ENCODE measurements at regions of chr4 and their contacts with region 1.

Region 1: GRCh38 chr4:169810325-169811323 is 52.9 kb upstream of the HPF1 start:
- DNase-seq: peak; percentile 8
- ATAC-seq: peak; percentile 77
- H3K4me3 ChIP-seq: no peak overlapping the region
- H3K27ac ChIP-seq: no peak overlapping the region
- H3K4me1 ChIP-seq: no peaks in the 10 kb centered on the region
- H3K27me3 ChIP-seq: no peaks in the 10 kb centered on the region
- CTCF ChIP-seq: peak; percentile 66 to 76 (median 67)
- EP300 ChIP-seq: no peak
- POLR2A ChIP-seq: no peak
- RAD21 ChIP-seq: peak; percentile 74

Region 2: GRCh38 chr4:169311643-169312365 is 498.8 kb before region 1 on chr4:
- CTCF ChIA-PET with region 1: no interaction called
- POLR2A ChIA-PET with region 1: no interaction called
- RAD21 ChIA-PET with region 1: no interaction called
- SMC1A ChIA-PET with region 1: no interaction called
- in situ Hi-C with region 1: no loop called
- intact Hi-C with region 1: no loop called
- DNase-seq: peak; percentile 30
- ATAC-seq: peak; percentile 96
- H3K4me3 ChIP-seq: no peak overlapping the region
- H3K27ac ChIP-seq: no peak overlapping the region
- H3K4me1 ChIP-seq: no peaks in the 10 kb centered on the region
- H3K27me3 ChIP-seq: no peaks in the 10 kb centered on the region
- CTCF ChIP-seq: peak; percentile 42 to 45 (median 44)
- EP300 ChIP-seq: no peak
- POLR2A ChIP-seq: no peak
- RAD21 ChIP-seq: peak; percentile 71

Region 3: GRCh38 chr4:169795585-169795984 is 15.0 kb before region 1 on chr4:
- CTCF ChIA-PET with region 1: interaction called, 15 read pairs
- POLR2A ChIA-PET with region 1: no interaction called
- RAD21 ChIA-PET with region 1: no interaction called
- SMC1A ChIA-PET with region 1: interaction called, 6 read pairs
- in situ Hi-C with region 1: no loop called
- intact Hi-C with region 1: no loop called
- DNase-seq: no peak
- ATAC-seq: no peak
- H3K4me3 ChIP-seq: no peak overlapping the region
- H3K27ac ChIP-seq: no peak overlapping the region
- H3K4me1 ChIP-seq: no peaks in the 10 kb centered on the region
- H3K27me3 ChIP-seq: peaks cover 0 to 3% of the 10 kb centered on the region in 2 experiments; a peak in 2 of 4 replicates
- CTCF ChIP-seq: no peak
- EP300 ChIP-seq: no peak
- POLR2A ChIP-seq: no peak
- RAD21 ChIP-seq: no peak

Region 4: DNA sequence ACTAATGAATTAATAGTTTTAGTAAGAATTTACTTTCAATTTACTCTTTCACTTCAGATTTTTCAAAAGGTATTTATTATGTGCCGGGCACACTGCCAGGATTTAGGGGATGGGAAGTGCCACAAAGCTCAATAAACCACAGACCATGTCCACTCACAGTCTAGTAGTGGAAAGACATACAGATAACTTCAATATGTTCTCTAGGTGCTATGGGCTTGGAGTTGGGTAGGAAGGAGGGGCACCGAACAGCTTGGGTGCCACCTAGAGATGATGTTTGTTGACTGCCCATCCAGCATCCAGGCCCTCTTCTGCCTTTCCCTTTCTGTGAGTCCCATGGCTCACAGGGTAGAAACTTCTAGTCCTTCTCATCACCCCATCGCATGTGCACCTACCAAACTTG is 197.7 kb after region 1 on chr4:
- CTCF ChIA-PET with region 1: interaction called, 12 read pairs
- POLR2A ChIA-PET with region 1: no interaction called
- RAD21 ChIA-PET with region 1: no interaction called
- SMC1A ChIA-PET with region 1: interaction called, 3 read pairs
- in situ Hi-C with region 1: no loop called
- intact Hi-C with region 1: no loop called
- DNase-seq: no peak
- ATAC-seq: peak; percentile 82
- H3K4me3 ChIP-seq: no peak overlapping the region
- H3K27ac ChIP-seq: no peak overlapping the region
- H3K4me1 ChIP-seq: no peaks in the 10 kb centered on the region; the same call in 1 of the 2 replicates
- H3K27me3 ChIP-seq: no peaks in the 10 kb centered on the region
- CTCF ChIP-seq: peak in 1 of 3 experiments; percentile 20; a peak in 2 of 6 replicates
- EP300 ChIP-seq: no peak
- POLR2A ChIP-seq: no peak
- RAD21 ChIP-seq: no peak

Region 5: DNA sequence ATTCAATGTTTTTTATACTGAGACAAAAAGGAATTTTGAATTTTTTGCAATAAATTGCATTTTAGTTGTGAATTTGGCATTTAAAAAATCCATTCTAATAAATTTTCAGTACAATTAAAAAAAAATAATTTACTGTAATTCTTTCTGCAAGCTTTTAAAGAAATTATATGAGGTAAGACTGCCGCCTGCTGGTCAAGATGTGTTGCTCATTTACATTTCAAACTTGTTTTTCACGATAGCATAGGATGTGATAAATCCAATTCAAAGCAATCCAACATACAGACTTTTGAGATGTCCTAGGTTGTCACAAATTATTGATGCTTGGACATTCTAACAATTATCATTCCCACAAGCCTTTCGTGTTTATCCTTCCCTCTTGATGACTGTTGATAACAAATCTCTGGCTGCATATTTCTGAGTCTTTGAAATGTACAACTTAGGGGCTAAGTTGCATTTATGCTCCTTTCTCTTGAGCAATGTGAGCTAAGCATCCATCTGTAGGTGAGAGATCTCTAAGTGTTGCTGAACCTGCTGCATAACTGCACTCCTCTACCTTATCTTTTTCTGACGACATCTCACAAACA is 237.2 kb after region 1 on chr4:
- CTCF ChIA-PET with region 1: interaction called, 37 read pairs
- POLR2A ChIA-PET with region 1: no interaction called
- RAD21 ChIA-PET with region 1: interaction called, 12 read pairs
- SMC1A ChIA-PET with region 1: interaction called, 24 read pairs
- in situ Hi-C with region 1: loop called (anchors 5 kb)
- intact Hi-C with region 1: loop called (anchors 1 kb)
- DNase-seq: no peak
- ATAC-seq: no peak; the same call in 2 of the 3 replicates
- H3K4me3 ChIP-seq: no peak overlapping the region
- H3K27ac ChIP-seq: no peak overlapping the region
- H3K4me1 ChIP-seq: no peaks in the 10 kb centered on the region
- H3K27me3 ChIP-seq: no peaks in the 10 kb centered on the region
- CTCF ChIP-seq: peak; percentile 63 to 79 (median 75)
- EP300 ChIP-seq: no peak
- POLR2A ChIP-seq: no peak
- RAD21 ChIP-seq: peak; percentile 88

Measured in GM12878 (cell line).